Left lung (tissue), 14 donors: ENCODE measurements at regions of chr18 and their contacts with region 1.

Region 1: GRCh38 chr18:35290073-35290735 is at the start of gene ZSCAN30:
- DNase-seq: peak; percentile 95 to 97 (median 96)
- ATAC-seq: peak; percentile 99
- H3K4me3 ChIP-seq: peak within 1 kb of the TSS; percentile 76 to 89
- H3K27ac ChIP-seq: peak within 1 kb of the TSS; percentile 80 to 85
- H3K4me1 ChIP-seq: peaks cover 9 to 23% of the 10 kb centered on the region in 2 donors
- H3K27me3 ChIP-seq: no peaks in the 10 kb centered on the region
- CTCF ChIP-seq: no peak
- polyA plus RNA-seq, gene ZSCAN30: 50.9 to 68.7 (median 59.6) TPM

Region 2: DNA sequence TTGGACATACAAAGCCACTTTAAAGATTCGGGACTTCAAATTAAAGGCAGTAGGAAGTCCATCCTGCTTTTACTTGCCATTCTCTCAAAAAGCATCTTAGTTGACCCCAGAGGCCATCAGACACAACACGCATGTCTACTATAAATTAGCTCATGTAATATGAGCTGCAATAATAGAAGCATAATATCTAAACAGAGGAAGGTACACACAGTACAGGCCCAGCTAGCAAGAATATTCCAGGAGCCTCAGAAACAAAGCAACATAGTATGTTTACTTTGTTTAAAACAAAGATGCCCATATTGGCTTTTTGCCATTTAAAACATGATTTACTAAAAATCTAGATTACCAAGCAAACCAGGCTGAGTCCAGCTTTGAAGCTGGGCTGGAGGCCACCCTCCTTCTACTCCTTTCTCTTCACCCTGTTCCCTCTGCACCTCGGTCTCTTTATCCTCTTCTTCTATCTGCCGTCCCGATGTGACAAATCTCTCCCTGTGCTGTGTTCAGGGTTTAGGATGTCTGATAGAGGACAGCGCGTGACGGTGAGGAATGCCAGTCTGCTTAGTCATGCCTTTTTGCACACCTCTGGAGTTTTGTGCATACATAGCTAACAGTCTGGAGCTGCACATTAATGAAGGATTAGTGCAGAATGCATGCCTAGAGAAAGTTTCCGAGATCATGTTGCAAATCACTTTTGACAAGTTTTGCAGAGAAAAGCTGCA is 551.9 kb before region 1 on chr18:
- intact Hi-C with region 1: no loop called
- DNase-seq: no peak
- ATAC-seq: peak; percentile 71
- H3K4me3 ChIP-seq: no peak overlapping the region
- H3K27ac ChIP-seq: no peak overlapping the region
- H3K4me1 ChIP-seq: no peaks in the 10 kb centered on the region
- H3K27me3 ChIP-seq: no peaks in the 10 kb centered on the region
- CTCF ChIP-seq: no peak

Region 3: DNA sequence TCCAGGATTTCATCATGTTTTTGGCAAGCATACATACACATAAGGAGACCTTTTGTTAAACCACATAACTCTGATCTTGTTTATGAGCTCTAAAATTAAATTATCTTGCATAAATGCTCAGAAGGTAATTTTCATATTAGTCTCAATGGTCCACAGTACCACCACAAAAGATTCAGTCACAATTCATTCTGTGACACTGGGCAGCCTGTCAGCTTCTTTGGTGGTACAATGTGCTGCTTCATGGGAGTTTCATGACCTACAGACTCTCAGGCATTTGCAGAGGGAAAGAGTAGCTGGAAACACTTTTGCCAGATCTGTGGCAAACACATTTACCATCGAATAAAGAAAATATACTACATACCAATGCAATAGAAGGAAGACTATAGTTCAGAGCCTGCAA is 100.7 kb before region 1 on chr18:
- intact Hi-C with region 1: no loop called
- DNase-seq: no peak
- ATAC-seq: no peak
- H3K4me3 ChIP-seq: no peak overlapping the region
- H3K27ac ChIP-seq: no peak overlapping the region
- H3K4me1 ChIP-seq: no peaks in the 10 kb centered on the region
- H3K27me3 ChIP-seq: no peaks in the 10 kb centered on the region
- CTCF ChIP-seq: no peak

Region 4: GRCh38 chr18:35343936-35344735 is 53.9 kb after region 1 on chr18 and contains the start of gene ZNF24:
- intact Hi-C with region 1: loop called in 1 of 2 experiments (anchors 5 kb)
- DNase-seq: peak; percentile 96 to 99 (median 98)
- ATAC-seq: peak; percentile 99
- H3K4me3 ChIP-seq: peak within 1 kb of the TSS; percentile 75 to 87
- H3K27ac ChIP-seq: peak within 1 kb of the TSS; percentile 90 to 99
- H3K4me1 ChIP-seq: peaks cover 9 to 51% of the 10 kb centered on the region in 2 donors
- H3K27me3 ChIP-seq: no peaks in the 10 kb centered on the region
- CTCF ChIP-seq: no peak
- polyA plus RNA-seq, gene ZNF24: 63.7 to 68.9 (median 67.5) TPM